ENCODE measurements at regions of chr6 and their contacts with region 1.

Region 1: GRCh38 chr6:34986845-34987246 is 97.8 kb downstream of the ANKS1A start:
- DNase-seq: no peak
- H3K4me3 ChIP-seq: no peak overlapping the region
- H3K27ac ChIP-seq: no peak overlapping the region
- H3K4me1 ChIP-seq: peaks cover 0 to 10% (median 0%) of the 10 kb centered on the region in 6 donors
- H3K27me3 ChIP-seq: no peaks in the 10 kb centered on the region
- CTCF ChIP-seq: peak; percentile 23 to 81 (median 70)
- POLR2A ChIP-seq: no peak

Region 2: DNA sequence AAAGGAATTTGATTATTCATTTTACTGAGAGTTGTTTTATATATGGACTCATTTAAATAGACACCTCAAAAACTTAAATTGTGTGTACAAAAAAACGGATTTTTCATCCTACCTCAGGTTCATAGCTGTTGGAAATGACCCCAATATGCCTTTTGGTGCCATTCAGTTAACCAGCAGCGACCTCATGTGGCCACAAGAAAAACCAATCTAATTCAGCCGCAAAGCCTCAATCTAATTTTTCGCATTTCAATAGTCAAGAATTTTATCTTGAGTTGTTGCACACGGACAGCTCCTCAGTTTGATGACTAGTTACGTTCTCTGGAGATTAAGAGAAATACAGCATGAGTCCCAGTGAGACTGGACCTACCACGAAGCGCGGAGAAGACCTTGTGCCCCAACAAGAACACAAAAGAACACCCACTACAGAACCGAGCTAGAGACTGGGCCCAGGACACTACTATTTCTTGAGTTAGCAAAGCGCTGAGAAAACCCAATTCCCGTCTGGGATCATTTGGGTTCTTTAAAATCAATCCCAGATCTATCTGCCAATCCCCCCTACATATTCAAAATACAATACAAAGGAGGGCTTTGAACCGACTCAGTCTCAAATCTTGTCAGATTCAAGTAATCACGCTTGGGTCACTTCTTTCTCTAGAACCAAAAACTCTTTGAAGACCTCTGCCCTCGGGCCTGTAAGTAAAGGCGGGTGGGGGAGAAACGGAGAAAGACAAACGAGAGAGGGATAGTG is 153.2 kb after region 1 on chr6:
- intact Hi-C with region 1: loop called (anchors 5 kb)
- DNase-seq: no peak
- H3K4me3 ChIP-seq: no peak overlapping the region
- H3K27ac ChIP-seq: no peak overlapping the region
- H3K4me1 ChIP-seq: peaks cover 0 to 25% (median 15%) of the 10 kb centered on the region in 6 donors
- H3K27me3 ChIP-seq: peaks cover 0 to 21% (median 13%) of the 10 kb centered on the region in 7 donors
- CTCF ChIP-seq: peak; percentile 62 to 84 (median 74)
- POLR2A ChIP-seq: no peak

Region 3: GRCh38 chr6:35161776-35162607 is 175.1 kb after region 1 on chr6:
- intact Hi-C with region 1: no loop called
- DNase-seq: no peak
- H3K4me3 ChIP-seq: no peak overlapping the region
- H3K27ac ChIP-seq: peak overlapping the region in 2 of 8 donors; percentile 18 to 33
- H3K4me1 ChIP-seq: peaks cover 12 to 34% (median 20%) of the 10 kb centered on the region in 6 donors
- H3K27me3 ChIP-seq: no peaks in the 10 kb centered on the region
- CTCF ChIP-seq: no peak
- POLR2A ChIP-seq: no peak

Region 4: GRCh38 chr6:35202066-35202546 is 215.3 kb after region 1 on chr6:
- intact Hi-C with region 1: loop called (anchors 10 kb)
- DNase-seq: no peak
- H3K4me3 ChIP-seq: no peak overlapping the region
- H3K27ac ChIP-seq: no peak overlapping the region
- H3K4me1 ChIP-seq: no peaks in the 10 kb centered on the region
- H3K27me3 ChIP-seq: peaks cover 0 to 48% (median 0%) of the 10 kb centered on the region in 7 donors
- CTCF ChIP-seq: no peak
- POLR2A ChIP-seq: no peak